AG04450 (cell line): ENCODE measurements at regions of chr6 and their contacts with region 1.

Region 1: GRCh38 chr6:112029045-112029822 is 24.7 kb upstream of the CCN6 start:
- DNase-seq: peak; percentile 41
- H3K4me3 ChIP-seq: no peak overlapping the region
- H3K27ac ChIP-seq: no peak overlapping the region
- H3K27me3 ChIP-seq: peaks cover 14% of the 10 kb centered on the region
- CTCF ChIP-seq: peak; percentile 77

Region 2: DNA sequence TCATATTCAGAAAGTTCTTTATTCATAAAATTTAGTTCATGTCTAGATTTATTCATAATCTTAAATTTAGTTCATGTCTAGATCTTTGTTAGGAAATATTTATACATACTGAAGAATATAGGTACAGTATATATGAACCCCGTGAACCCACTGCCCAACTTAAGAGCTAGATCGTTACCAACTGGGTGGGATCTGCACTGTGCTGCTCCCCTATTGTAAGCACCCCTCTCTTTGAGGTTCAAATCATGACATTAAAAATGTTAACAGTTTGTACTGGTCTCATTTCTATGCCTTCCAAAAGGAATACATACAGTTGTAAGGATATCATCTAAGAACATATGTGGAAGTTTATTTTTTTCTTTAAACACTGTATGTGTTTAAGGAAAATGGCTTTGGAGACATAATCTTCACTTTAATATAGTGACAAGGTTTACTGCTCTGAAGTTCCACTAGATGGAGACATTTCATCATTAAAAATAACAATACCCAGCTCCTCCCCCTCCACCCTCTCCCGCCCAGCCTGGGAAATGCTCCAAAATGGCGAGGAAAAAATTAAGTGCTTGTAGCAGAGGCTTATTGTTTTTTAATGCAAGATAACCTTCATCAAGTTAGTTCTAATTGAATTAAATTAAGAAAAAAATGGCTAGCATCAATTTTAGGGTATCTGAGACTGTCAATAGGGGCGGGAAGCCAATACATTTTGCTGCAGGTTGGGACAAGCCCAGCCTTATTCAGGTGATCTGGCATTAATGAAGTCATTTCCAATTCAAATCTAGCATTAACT is 319.4 kb before region 1 on chr6:
- CTCF ChIA-PET with region 1: interaction called, 14 read pairs
- POLR2A ChIA-PET with region 1: no interaction called
- DNase-seq: no peak
- H3K4me3 ChIP-seq: no peak overlapping the region
- H3K27ac ChIP-seq: no peak overlapping the region
- H3K27me3 ChIP-seq: no peaks in the 10 kb centered on the region
- CTCF ChIP-seq: peak; percentile 62

Region 3: DNA sequence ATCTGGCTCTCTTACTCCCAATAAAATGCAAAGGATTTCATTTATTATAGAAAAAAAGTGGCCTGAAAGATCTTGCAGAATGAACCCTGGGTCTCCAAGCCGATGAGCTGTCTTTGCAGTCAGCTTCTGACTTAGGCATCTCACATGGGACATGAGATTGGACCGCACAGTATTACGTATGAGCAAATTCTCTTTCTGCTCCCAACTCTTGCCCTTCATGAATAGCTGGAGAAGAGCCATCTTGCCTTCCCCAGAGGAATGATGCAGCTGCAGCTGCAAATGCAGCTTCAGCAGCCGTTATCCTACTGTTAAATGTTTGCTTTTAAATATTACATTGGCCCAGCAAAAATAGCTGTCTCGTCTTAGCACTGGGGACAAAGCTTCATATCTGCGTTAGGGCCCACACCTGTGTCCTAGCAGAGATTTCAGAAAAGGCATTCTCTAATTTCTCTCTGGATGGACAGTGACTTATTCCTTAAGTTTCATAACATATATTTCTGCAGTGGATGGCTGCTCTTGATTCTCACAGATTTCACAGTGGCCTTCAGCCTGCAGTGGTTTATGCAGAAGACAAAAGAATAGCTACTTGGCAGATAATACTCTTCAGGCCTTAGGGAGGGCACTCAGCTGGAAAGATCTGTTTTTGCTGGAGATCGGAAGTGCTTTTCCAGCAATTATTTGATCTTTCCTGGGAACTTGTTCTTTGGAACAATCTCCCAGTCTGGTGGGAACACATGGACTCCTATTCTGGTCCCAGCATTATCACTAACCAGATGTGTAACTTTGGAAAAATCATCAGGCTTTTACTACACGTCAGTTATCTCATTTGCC is 285.2 kb before region 1 on chr6:
- CTCF ChIA-PET with region 1: no interaction called
- POLR2A ChIA-PET with region 1: no interaction called
- DNase-seq: peak; percentile 52
- H3K4me3 ChIP-seq: no peak overlapping the region
- H3K27ac ChIP-seq: no peak overlapping the region
- H3K27me3 ChIP-seq: no peaks in the 10 kb centered on the region
- CTCF ChIP-seq: no peak

Region 4: GRCh38 chr6:111781041-111781708 is 248.1 kb before region 1 on chr6:
- CTCF ChIA-PET with region 1: no interaction called
- POLR2A ChIA-PET with region 1: no interaction called
- DNase-seq: no peak
- H3K4me3 ChIP-seq: no peak overlapping the region
- H3K27ac ChIP-seq: no peak overlapping the region
- H3K27me3 ChIP-seq: no peaks in the 10 kb centered on the region
- CTCF ChIP-seq: no peak

Region 5: DNA sequence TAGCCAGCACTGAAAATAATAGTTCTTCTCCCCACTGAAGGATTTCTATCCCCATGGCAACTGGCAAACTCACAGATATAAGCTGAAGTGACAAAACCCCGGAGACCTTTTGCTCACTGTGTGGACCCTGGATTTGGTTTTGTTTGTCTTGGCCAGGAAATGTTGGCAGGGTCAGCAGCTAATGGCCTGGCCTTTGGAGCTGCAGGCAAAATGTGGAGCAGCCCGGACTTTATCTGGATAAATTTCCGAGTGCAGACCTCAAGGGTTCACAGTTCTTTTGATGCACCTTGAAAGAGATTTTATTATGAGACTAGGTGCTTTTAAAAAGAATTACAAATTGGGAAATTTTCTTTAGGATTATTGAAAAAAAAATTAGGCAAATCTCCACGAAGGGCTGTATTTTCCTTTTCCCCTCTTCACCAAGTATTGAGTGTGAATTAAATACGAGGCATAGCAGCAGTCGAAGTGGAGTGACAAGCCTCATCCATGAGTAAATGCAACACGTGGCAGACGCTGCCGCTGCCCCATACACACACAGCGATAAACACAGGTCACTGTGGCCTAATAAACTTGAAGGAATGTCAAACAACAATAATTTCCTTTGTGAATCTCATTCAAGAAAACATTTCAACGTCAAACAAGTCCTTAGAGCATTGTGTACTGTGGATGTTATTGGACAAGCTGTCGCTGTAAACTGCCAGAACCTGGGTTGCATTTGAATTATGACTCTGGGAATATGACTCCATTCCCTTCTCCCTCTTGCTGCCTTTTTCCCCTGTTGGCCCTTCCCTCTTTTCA is 10.4 kb before region 1 on chr6:
- CTCF ChIA-PET with region 1: interaction called, 20 read pairs
- POLR2A ChIA-PET with region 1: no interaction called
- DNase-seq: no peak
- H3K4me3 ChIP-seq: no peak overlapping the region
- H3K27ac ChIP-seq: no peak overlapping the region
- H3K27me3 ChIP-seq: no peaks in the 10 kb centered on the region
- CTCF ChIP-seq: no peak